ENCODE measurements at regions of chr16 and their contacts with region 1.

Region 1: GRCh38 chr16:1342526-1343427 is 8.9 kb downstream of the TSR3 start:
- DNase-seq: peak; percentile 93 to 97 (median 95)
- H3K4me3 ChIP-seq: peak overlapping the region; percentile 62
- H3K4me3 Mint-ChIP-seq: peak overlapping the region; percentile 21 to 89 (median 79)
- H3K27ac ChIP-seq: no peak overlapping the region
- H3K27ac Mint-ChIP-seq: peak overlapping the region; percentile 4 to 83 (median 72)
- H3K4me1 ChIP-seq: peaks cover 19% of the 10 kb centered on the region
- H3K4me1 Mint-ChIP-seq: peaks cover 13 to 28% (median 13%) of the 10 kb centered on the region in 3 donors
- H3K27me3 ChIP-seq: no peaks in the 10 kb centered on the region
- H3K27me3 Mint-ChIP-seq: no peaks in the 10 kb centered on the region

Region 2: GRCh38 chr16:1308977-1309885 is 33.5 kb before region 1 on chr16 and contains the start of gene UBE2I:
- CTCF ChIA-PET with region 1: interaction called, 6 read pairs
- POLR2A ChIA-PET with region 1: interaction called, 14 read pairs
- DNase-seq: peak; percentile 93 to 100 (median 98)
- H3K4me3 ChIP-seq: peak within 1 kb of the TSS; percentile 84
- H3K4me3 Mint-ChIP-seq: peak within 1 kb of the TSS; percentile 95 to 99 (median 96)
- H3K27ac ChIP-seq: peak within 1 kb of the TSS; percentile 100
- H3K27ac Mint-ChIP-seq: peak within 1 kb of the TSS; percentile 91 to 100 (median 99)
- H3K4me1 ChIP-seq: peaks cover 39% of the 10 kb centered on the region
- H3K4me1 Mint-ChIP-seq: peaks cover 28 to 57% (median 30%) of the 10 kb centered on the region in 3 donors
- H3K27me3 ChIP-seq: no peaks in the 10 kb centered on the region
- H3K27me3 Mint-ChIP-seq: no peaks in the 10 kb centered on the region
- total RNA-seq, gene UBE2I: 238 to 257 TPM

Region 3: DNA sequence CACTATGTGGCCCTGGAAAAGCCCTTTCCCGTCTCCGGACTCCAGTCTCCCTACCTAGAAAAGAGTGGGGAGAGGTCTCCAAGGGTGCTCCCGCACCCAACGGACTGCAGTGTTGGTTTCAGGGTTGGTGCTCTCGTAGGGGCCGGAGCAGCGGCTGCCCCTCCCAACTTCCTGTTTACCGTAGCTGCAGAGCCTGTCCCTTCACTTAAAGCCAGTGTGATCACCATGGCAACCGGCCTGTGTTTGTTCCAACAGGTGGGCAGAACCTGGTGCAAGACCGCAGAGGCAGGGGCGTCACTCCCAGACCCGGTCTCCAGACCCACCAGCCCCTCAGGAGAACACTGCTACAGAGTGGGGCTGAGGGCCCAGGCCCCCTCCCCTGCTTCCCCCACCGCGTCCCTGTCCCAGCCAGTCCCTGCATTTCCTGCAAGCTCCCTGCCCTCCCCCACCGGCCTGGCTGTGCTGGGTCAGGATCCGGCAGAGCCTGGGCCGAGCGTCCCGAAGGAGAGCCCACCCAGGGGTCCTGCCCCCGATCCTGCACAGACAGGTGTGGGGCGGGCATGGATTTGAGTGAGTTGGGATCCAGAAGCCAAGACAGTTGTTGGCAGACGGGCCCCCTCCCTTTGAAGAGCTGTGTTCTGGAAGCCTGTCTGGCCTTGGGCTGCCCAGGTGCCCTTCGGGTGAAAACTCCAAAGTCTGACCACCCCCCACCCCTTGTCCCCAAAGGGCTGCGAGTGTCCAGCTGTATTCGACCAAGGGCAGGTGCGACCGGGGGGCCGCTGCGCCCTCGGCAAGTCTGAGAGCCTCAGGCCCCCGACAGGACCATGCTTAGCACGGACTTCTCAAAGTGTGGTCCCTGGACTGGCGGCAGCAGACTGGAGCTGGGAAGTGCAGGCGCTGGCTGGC is 10.8 kb before region 1 on chr16:
- CTCF ChIA-PET with region 1: no interaction called
- POLR2A ChIA-PET with region 1: interaction called, 13 read pairs
- DNase-seq: peak in 4 of 5 donors; percentile 34 to 82 (median 58)
- H3K4me3 ChIP-seq: peak overlapping the region; percentile 40
- H3K4me3 Mint-ChIP-seq: peak overlapping the region; percentile 80 to 93 (median 83)
- H3K27ac ChIP-seq: peak overlapping the region; percentile 70
- H3K27ac Mint-ChIP-seq: peak overlapping the region; percentile 57 to 96 (median 88)
- H3K4me1 ChIP-seq: peaks cover 27% of the 10 kb centered on the region
- H3K4me1 Mint-ChIP-seq: peaks cover 12 to 41% (median 14%) of the 10 kb centered on the region in 3 donors
- H3K27me3 ChIP-seq: peaks cover 25% of the 10 kb centered on the region
- H3K27me3 Mint-ChIP-seq: peaks cover 3 to 9% of the 10 kb centered on the region in 2 donors